GM10248 (cell line): ENCODE measurements at regions of chr13 and their contacts with region 1.

Region 1: DNA sequence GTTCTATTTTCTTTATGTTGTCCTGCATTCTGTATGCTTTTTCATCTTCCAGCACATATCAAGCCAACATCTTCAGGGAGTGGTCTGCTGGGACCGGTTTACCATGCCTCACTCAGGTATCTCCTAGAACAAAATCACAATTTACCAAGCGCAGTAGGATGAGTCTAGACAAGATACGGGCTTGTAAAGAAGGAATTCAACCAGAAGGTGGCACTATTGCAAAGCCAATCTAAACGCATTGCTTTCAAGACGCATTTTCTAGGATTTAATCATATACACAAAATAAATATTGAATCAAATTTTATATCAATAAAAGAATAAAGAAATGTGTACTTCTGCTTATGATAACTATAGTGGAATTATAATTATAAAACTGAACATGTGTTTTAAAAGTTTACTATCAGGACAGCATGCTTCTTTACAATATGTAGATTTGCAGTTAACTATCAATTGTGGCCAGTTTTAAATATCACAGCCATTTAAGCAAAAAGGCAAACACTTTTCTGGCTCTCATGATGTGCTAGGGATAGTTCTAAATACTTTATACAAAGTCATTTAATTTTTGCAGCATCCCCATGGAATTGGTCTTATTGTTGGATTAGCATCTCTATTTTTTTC is 16.1 kb upstream of the TPP2 start:
- DNase-seq: peak; percentile 50
- CTCF ChIP-seq: peak; percentile 69

Region 2: GRCh38 chr13:102700083-102701001 is 119.7 kb after region 1 on chr13:
- CTCF ChIA-PET with region 1: no interaction called
- POLR2A ChIA-PET with region 1: no interaction called
- DNase-seq: no peak
- CTCF ChIP-seq: no peak

Region 3: DNA sequence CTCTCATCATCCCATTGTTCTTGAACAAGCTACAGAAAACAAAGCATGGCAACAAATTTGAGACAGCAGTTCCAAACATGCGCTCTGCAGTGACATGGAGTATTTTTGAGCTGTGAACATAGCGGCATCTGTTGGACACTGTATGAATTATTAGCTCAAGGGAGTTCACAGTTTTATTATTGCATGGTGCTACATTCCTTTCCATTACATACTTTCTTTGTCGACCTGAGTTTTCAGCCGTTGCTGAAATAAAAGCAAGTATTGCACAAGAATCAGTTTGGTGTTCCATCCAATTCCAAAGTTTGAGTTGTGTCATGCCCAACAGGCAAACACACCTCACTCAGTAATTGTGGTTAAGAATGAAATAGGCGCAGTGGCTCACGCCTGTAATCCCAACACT is 144.3 kb after region 1 on chr13:
- CTCF ChIA-PET with region 1: interaction called, 29 read pairs
- POLR2A ChIA-PET with region 1: no interaction called
- DNase-seq: no peak
- CTCF ChIP-seq: peak; percentile 40

Region 4: GRCh38 chr13:102845630-102846260 is 265.1 kb after region 1 on chr13 and contains the start of gene ERCC5:
- CTCF ChIA-PET with region 1: interaction called, 36 read pairs
- POLR2A ChIA-PET with region 1: no interaction called
- DNase-seq: peak; percentile 83
- CTCF ChIP-seq: peak; percentile 9